Activated CD4-positive, alpha-beta memory T cell treated with anti-CD3 and anti-CD28 coated beads for 36 hours (primary cell): ENCODE measurements at regions of chr21 and their contacts with region 1.

Region 1: GRCh38 chr21:30733026-30733425 is 14.0 kb downstream of the KRTAP21-2 start:
- DNase-seq: no peak
- H3K4me3 Mint-ChIP-seq: no peak overlapping the region
- H3K27ac Mint-ChIP-seq: no peak overlapping the region
- H3K4me1 Mint-ChIP-seq: no peaks in the 10 kb centered on the region
- H3K27me3 Mint-ChIP-seq: peaks cover 4% of the 10 kb centered on the region

Region 2: DNA sequence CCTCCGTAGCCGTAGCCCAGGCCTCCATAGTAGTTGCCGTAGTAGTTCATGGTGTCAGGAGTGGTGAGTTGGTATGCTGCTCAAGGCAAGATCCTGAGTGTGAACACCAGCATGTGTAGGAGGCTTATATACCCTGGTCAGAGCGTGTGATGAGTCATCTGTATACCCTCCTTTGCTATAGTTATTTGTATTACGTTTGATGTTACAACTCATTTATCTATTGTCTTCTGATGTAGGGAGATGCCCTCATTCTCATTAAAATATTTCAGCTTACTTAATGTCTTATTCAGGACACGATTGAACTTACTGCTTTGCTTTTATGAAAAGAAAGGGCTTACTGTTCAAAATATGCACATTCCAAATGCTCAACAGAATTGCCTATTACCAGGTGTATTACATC is 231.0 kb before region 1 on chr21 and contains the start of gene KRTAP19-5:
- CTCF ChIA-PET with region 1: interaction called, 7 read pairs
- POLR2A ChIA-PET with region 1: no interaction called
- intact Hi-C with region 1: loop called (anchors 1 kb)
- DNase-seq: no peak
- H3K4me3 Mint-ChIP-seq: no peak within 1 kb of the TSS
- H3K27ac Mint-ChIP-seq: no peak within 1 kb of the TSS
- H3K4me1 Mint-ChIP-seq: no peaks in the 10 kb centered on the region
- H3K27me3 Mint-ChIP-seq: peaks cover 3% of the 10 kb centered on the region
- total RNA-seq, gene KRTAP19-5: not detected

Region 3: GRCh38 chr21:30625449-30626165 is 107.4 kb before region 1 on chr21:
- CTCF ChIA-PET with region 1: no interaction called
- POLR2A ChIA-PET with region 1: no interaction called
- intact Hi-C with region 1: no loop called
- DNase-seq: no peak
- H3K4me3 Mint-ChIP-seq: no peak overlapping the region
- H3K27ac Mint-ChIP-seq: no peak overlapping the region
- H3K4me1 Mint-ChIP-seq: no peaks in the 10 kb centered on the region
- H3K27me3 Mint-ChIP-seq: no peaks in the 10 kb centered on the region

Region 4: GRCh38 chr21:30707409-30707808 is 25.6 kb before region 1 on chr21:
- CTCF ChIA-PET with region 1: no interaction called
- POLR2A ChIA-PET with region 1: no interaction called
- intact Hi-C with region 1: no loop called
- DNase-seq: no peak
- H3K4me3 Mint-ChIP-seq: no peak overlapping the region
- H3K27ac Mint-ChIP-seq: no peak overlapping the region
- H3K4me1 Mint-ChIP-seq: peaks cover 4% of the 10 kb centered on the region
- H3K27me3 Mint-ChIP-seq: no peaks in the 10 kb centered on the region

Region 5: GRCh38 chr21:30747159-30747558 is 14.1 kb after region 1 on chr21 and contains the start of gene KRTAP21-2:
- CTCF ChIA-PET with region 1: no interaction called
- POLR2A ChIA-PET with region 1: no interaction called
- intact Hi-C with region 1: no loop called
- DNase-seq: no peak
- H3K4me3 Mint-ChIP-seq: no peak within 1 kb of the TSS
- H3K27ac Mint-ChIP-seq: no peak within 1 kb of the TSS
- H3K4me1 Mint-ChIP-seq: no peaks in the 10 kb centered on the region
- H3K27me3 Mint-ChIP-seq: peaks cover 2% of the 10 kb centered on the region
- total RNA-seq, gene KRTAP21-2: not detected